Mucosa of descending colon (tissue), 3 donors: ENCODE measurements at regions of chr15 and their contacts with region 1.

Region 1: GRCh38 chr15:65184868-65185738 is at the start of gene CLPX:
- DNase-seq: peak; percentile 92 to 97 (median 94)
- ATAC-seq: peak; percentile 97
- H3K4me3 ChIP-seq: peak within 1 kb of the TSS; percentile 57
- H3K4me1 ChIP-seq: peaks cover 17% of the 10 kb centered on the region
- CTCF ChIP-seq: no peak
- total RNA-seq, gene CLPX: 39.4 to 51.5 (median 50.8) TPM

Region 2: DNA sequence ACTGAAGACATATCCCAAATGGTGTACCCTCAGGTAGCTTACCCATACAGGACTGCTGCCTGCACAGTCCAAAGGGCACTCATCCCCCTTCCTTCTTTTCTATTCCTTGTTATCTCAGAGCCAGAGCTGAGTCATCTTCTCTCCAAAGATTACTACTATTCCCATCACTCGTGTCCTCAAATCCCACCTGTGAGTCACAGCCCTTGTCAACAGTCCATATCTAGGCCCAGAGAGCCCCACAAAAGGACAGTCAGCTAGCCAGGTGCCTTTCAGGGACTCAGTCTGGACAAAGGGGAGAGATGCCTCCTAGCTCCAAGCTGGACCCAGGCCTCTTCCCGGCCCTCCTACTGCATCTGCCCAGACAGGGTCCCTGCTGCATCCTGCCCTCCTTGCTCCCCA is 90.6 kb after region 1 on chr15:
- intact Hi-C with region 1: loop called in 1 of 2 experiments (anchors 5 kb)
- DNase-seq: no peak
- ATAC-seq: peak; percentile 60
- H3K4me3 ChIP-seq: no peak overlapping the region
- H3K4me1 ChIP-seq: peaks cover 9% of the 10 kb centered on the region
- CTCF ChIP-seq: no peak

Region 3: GRCh38 chr15:65298731-65299130 is 113.6 kb after region 1 on chr15:
- intact Hi-C with region 1: loop called in 1 of 2 experiments (anchors 5 kb)
- DNase-seq: no peak
- ATAC-seq: no peak
- H3K4me3 ChIP-seq: no peak overlapping the region
- H3K4me1 ChIP-seq: peaks cover 10% of the 10 kb centered on the region
- CTCF ChIP-seq: no peak

Region 4: DNA sequence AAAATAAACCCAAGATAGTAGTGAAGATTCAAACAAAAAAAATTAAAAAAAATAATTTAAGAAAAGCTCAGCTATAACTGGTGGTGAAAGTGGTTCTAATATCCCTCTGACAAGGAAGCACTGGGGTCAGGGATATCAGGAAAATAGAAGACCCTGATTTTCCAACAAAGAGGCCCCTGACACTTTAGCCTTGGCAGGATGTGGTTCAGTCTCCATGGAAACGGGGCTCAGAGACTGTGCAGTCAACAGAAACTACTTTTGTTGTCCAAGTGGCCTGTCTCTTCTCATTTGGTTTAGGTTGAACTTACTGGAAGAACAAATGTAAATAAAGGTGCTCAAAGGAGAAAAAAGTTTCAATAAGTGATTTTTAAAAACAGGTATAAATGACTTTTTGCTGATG is 398.6 kb after region 1 on chr15:
- intact Hi-C with region 1: no loop called
- DNase-seq: peak in 1 of 3 donors; percentile 21
- ATAC-seq: no peak
- H3K4me3 ChIP-seq: no peak overlapping the region
- H3K4me1 ChIP-seq: no peaks in the 10 kb centered on the region
- CTCF ChIP-seq: no peak